CD14-positive monocyte (primary cell): ENCODE measurements at regions of chrX and their contacts with region 1.

Region 1: DNA sequence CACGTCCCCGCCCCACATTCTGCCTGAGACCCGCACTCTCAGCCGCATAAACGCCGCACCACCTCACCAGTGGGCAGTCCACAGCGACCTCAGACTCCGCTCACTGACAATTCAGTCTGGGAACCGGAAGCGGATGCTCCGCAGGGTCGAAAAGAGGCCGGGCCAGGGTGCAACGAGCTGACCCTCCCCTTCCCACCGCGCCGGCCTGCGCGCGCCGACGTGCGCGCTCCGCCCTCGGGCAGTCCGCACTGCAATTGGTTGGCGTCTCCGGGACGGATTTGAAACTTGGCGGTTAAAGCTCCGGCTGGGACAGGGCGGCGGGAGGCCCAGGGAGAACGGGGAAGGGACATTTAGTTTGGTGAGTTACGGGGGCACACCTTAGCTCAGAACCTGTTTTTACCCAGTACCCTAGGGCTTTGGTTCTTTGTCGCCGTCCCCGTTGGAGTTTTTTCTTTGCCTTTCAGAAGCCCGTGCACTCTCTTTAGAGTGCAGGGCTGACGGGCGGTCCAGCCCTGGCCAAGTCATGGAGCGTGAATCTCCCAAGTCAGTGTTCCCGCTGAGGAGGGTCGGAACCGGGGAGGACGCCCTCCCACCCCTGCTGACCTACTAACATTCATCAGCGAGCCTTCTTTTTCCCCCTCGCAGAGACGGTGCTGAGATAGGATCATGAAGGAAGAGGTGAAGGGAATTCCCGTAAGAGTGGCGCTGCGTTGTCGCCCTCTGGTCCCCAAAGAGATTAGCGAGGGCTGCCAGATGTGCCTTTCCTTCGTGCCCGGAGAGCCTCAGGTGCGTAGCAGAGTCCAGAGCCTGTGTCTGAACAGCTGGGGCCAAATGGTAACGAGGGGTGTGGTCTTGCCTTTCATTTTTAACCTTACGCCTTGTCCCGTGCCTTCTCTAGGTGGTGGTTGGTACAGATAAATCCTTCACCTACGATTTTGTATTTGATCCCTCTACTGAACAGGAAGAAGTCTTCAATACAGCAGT is at the starts of genes KIF4A and PDZD11:
- DNase-seq: peak; percentile 70 to 79 (median 79)
- H3K4me3 ChIP-seq: peak within 1 kb of the TSS; percentile 53 to 87 (median 76)
- H3K4me3 Mint-ChIP-seq: peak within 1 kb of the TSS; percentile 81 to 93
- H3K27ac ChIP-seq: peak within 1 kb of the TSS; percentile 52 to 84
- H3K27ac Mint-ChIP-seq: peak within 1 kb of the TSS; percentile 70 to 94 (median 87)
- H3K4me1 ChIP-seq: peaks cover 14 to 24% of the 10 kb centered on the region in 2 donors
- H3K4me1 Mint-ChIP-seq: peaks cover 21% of the 10 kb centered on the region
- H3K27me3 ChIP-seq: no peaks in the 10 kb centered on the region
- H3K27me3 Mint-ChIP-seq: peaks cover 0 to 3% (median 0%) of the 10 kb centered on the region in 3 donors
- CTCF ChIP-seq: no peak
- polyA plus RNA-seq, gene KIF4A: 0.03 TPM in 1 of 3 donors, not detected in the others
- polyA plus RNA-seq, gene PDZD11: 16.9 to 18.9 (median 17.4) TPM

Region 2: GRCh38 chrX:69900491-69900890 is 389.6 kb before region 1 on chrX:
- intact Hi-C with region 1: no loop called
- DNase-seq: no peak
- H3K4me3 ChIP-seq: no peak overlapping the region
- H3K4me3 Mint-ChIP-seq: no peak overlapping the region
- H3K27ac ChIP-seq: no peak overlapping the region
- H3K27ac Mint-ChIP-seq: no peak overlapping the region
- H3K4me1 ChIP-seq: no peaks in the 10 kb centered on the region
- H3K4me1 Mint-ChIP-seq: no peaks in the 10 kb centered on the region
- H3K27me3 ChIP-seq: no peaks in the 10 kb centered on the region
- H3K27me3 Mint-ChIP-seq: peaks cover 0 to 2% (median 0%) of the 10 kb centered on the region in 3 donors
- CTCF ChIP-seq: no peak

Region 3: GRCh38 chrX:70133303-70134115 is 156.6 kb before region 1 on chrX and contains the start of gene IGBP1:
- intact Hi-C with region 1: loop called (anchors 2 to 5 kb)
- DNase-seq: peak; percentile 80 to 91 (median 87)
- H3K4me3 ChIP-seq: peak within 1 kb of the TSS; percentile 86 to 92 (median 88)
- H3K4me3 Mint-ChIP-seq: peak within 1 kb of the TSS; percentile 92 to 97
- H3K27ac ChIP-seq: peak within 1 kb of the TSS; percentile 93 to 94
- H3K27ac Mint-ChIP-seq: peak within 1 kb of the TSS; percentile 95 to 99 (median 97)
- H3K4me1 ChIP-seq: peaks cover 17 to 26% of the 10 kb centered on the region in 2 donors
- H3K4me1 Mint-ChIP-seq: peaks cover 15% of the 10 kb centered on the region
- H3K27me3 ChIP-seq: no peaks in the 10 kb centered on the region
- H3K27me3 Mint-ChIP-seq: peaks cover 0 to 4% (median 3%) of the 10 kb centered on the region in 3 donors
- CTCF ChIP-seq: peak; percentile 68
- polyA plus RNA-seq, gene IGBP1: 55.7 to 60.4 (median 56.8) TPM

Region 4: DNA sequence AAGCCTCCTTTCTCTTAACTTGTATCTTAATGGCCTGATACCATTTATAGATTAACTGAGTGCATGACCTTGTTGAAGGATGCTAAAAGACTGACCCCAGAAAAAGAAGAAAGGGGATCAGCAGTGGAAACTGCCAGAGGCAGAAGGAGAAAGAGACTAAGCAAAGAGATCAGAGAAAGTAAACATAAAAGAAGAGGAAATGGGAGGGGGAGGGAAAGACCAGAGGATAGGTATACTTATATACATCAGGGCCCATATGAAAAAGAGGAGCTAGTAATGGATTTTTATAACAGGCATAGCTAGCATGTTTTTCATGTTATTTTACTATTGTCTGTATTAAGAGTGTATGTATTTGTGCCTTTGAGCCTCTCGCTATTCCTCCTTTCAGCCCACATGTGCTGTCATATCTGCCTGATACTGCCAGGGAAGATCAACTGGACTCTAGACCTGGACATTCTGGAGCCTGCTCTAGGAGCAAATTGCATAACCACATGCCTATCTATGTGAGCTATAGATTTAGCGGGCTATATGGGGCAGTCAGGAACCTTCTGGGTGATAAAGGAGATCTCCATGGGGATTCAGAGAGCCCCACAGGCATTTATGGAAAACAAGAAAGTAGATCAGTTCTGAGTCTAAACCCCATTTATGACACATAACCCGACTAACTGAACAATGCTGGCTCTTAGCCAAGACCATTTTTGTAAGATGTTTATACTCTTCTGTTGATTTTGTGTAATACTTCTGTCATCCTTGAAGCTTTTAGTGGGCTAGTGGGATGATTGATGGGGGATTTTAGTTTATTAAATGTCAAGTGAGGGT is 791.5 kb after region 1 on chrX:
- intact Hi-C with region 1: no loop called
- DNase-seq: no peak
- H3K4me3 ChIP-seq: no peak overlapping the region
- H3K4me3 Mint-ChIP-seq: no peak overlapping the region
- H3K27ac ChIP-seq: no peak overlapping the region
- H3K27ac Mint-ChIP-seq: no peak overlapping the region
- H3K4me1 ChIP-seq: no peaks in the 10 kb centered on the region
- H3K4me1 Mint-ChIP-seq: no peaks in the 10 kb centered on the region
- H3K27me3 ChIP-seq: no peaks in the 10 kb centered on the region
- H3K27me3 Mint-ChIP-seq: peaks cover 0 to 9% (median 2%) of the 10 kb centered on the region in 3 donors
- CTCF ChIP-seq: no peak